Psoas muscle (tissue), 8 donors: ENCODE measurements at regions of chr15 and their contacts with region 1.

Region 1: DNA sequence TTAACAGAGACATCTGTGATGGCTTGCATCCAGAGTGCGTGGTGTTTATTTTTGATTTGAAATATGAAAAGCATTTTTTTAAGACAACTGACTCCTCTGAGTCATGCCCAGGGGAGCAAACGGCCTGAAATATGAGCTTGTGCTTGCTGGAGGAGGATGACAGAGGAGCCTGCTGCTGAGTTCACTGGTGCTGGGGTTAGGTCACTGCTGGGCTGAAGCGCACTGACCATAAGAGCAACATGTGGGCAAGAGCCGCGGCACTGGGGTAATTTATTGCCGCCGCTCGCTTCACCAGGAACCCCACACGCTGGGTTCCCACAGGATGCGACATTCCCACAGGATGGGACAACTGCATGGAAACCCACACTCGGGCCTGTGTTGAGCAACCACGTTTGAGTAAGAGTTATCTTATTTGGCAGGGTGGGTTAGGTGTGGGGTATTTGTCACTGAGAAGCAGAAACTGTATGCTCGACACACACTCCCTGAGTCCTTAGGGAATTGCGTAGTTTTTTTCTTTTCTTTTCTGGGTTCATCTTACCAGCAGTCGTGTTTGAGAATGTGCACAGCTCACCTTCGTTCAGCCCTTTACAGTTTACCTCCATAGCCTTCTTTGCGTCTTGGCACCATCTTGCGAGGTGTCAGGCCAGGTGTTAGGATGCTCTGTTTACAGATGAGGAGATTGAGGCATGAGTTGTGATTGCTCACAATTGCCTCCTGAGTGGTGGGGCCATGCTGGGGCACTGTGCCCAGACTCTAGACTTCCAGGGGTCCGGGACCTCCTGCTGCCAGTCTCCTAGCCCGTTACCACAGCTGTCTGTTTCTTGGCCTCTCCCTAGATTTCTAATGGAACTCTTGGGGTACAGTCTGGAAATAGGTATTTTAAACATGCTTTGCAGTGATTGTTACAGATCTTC is 60.4 kb downstream of the SMAD3 start:
- DNase-seq: peak; percentile 90 to 95
- ATAC-seq: peak; percentile 86 to 90 (median 89)
- H3K4me3 ChIP-seq: peak overlapping the region; percentile 31
- H3K27ac ChIP-seq: peak overlapping the region; percentile 97
- H3K4me1 ChIP-seq: peaks cover 88% of the 10 kb centered on the region
- H3K27me3 ChIP-seq: no peaks in the 10 kb centered on the region
- CTCF ChIP-seq: no peak

Region 2: DNA sequence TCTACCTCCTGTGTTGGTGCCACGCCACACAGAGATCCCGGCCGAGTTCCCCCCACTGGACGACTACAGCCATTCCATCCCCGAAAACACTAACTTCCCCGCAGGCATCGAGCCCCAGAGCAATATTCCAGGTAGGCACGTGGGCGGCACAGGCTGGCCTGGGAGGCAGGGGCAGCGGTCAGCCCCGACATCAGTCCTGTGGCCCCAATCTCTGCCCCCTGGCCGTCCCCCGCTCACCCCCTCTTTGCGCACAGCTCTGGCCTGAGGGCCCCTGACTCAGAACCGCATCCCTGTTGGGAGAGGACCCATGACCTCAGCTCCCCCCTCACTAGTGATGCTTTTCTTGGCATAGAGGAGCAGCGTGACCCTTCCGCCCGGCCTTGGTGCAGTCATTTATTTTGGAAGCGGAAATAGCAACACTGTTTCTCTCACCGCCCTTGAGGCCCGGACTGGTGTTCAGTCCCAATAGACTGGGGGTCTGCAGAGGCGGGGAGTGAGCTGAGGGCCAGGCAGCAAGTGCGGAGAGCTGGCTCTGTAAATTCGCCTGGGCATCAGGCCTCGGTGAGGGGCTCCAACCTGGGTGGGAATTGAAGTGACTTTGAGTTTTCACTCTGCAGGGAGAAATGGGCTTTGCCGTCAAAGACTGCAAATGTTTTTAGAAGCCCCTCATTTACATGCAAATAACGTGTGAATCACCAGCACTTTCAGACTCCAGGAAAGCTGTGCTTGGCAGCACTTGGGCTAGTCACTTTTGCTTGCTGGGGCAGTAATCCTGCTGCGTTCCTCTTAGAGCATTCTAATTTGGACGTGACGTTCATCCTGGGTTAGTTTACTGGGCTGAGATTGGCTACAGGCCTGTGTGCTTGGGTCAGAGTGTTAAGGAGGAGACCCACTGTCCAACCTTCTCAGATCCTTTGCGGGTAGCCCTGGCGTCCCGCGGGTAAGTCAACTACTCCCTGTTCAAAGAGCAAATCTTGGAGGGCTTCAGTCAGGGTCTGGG is 39.7 kb after region 1 on chr15:
- intact Hi-C with region 1: loop called in 1 of 2 experiments (anchors 5 kb)
- DNase-seq: peak in 1 of 2 donors; percentile 65
- ATAC-seq: peak; percentile 19 to 44 (median 42)
- H3K4me3 ChIP-seq: peak overlapping the region; percentile 36
- H3K27ac ChIP-seq: peak overlapping the region; percentile 88
- H3K4me1 ChIP-seq: peaks cover 89% of the 10 kb centered on the region
- H3K27me3 ChIP-seq: no peaks in the 10 kb centered on the region
- CTCF ChIP-seq: no peak

Region 3: DNA sequence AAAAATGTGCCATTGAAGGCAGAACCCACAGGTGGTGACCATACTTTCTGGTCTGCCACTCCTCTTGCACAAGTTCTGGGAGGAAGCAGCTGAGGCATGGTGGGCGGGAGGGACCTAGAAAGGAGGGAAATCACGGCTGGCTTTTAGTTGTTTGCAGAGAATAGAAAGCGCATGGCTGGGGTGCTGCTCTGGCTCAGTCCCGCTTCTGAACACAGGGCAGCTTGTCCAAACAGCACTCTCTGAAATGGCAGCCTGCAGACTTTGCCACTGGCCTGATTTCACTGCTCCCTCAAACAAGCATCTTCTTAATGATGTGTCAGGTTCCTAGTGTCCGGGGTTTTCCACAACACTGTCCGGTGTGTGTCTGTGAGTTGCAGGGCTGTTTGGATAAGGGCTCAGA is 51.9 kb after region 1 on chr15:
- intact Hi-C with region 1: no loop called
- DNase-seq: peak in 1 of 2 donors; percentile 27
- ATAC-seq: no peak
- H3K4me3 ChIP-seq: no peak overlapping the region
- H3K27ac ChIP-seq: peak overlapping the region; percentile 90
- H3K4me1 ChIP-seq: peaks cover 64% of the 10 kb centered on the region
- H3K27me3 ChIP-seq: no peaks in the 10 kb centered on the region
- CTCF ChIP-seq: no peak

Region 4: GRCh38 chr15:67188551-67189218 is 62.8 kb after region 1 on chr15:
- intact Hi-C with region 1: loop called (anchors 5 kb)
- DNase-seq: peak in 1 of 2 donors; percentile 64
- ATAC-seq: no peak
- H3K4me3 ChIP-seq: no peak overlapping the region
- H3K27ac ChIP-seq: peak overlapping the region; percentile 90
- H3K4me1 ChIP-seq: peaks cover 97% of the 10 kb centered on the region
- H3K27me3 ChIP-seq: no peaks in the 10 kb centered on the region
- CTCF ChIP-seq: no peak

Region 5: DNA sequence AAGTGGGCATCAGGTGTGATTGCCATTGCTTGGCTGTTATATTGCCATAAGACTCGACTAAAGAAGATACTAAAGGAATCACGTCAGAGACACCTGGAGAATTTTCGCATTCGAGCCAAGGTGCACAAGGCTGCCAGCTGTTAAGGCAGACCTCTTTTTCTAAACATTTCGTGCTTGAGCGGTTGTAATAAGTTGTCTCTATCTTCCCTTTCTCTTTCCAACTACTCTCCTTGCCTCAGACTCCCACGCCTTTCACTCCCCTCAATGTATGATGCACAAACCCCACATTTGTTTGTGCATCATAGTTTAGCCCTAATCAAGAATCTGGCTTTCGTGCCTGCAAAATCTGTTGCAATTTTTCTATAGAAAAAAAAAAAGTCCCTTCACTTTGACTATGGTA is 246.7 kb after region 1 on chr15:
- intact Hi-C with region 1: no loop called
- DNase-seq: no peak
- ATAC-seq: no peak
- H3K4me3 ChIP-seq: no peak overlapping the region
- H3K27ac ChIP-seq: no peak overlapping the region
- H3K4me1 ChIP-seq: no peaks in the 10 kb centered on the region
- H3K27me3 ChIP-seq: peaks cover 0 to 10% (median 0%) of the 10 kb centered on the region in 3 donors
- CTCF ChIP-seq: no peak